ENCODE measurements at regions of chr1 and their contacts with region 1.

Region 1: GRCh38 chr1:194295685-194296084 is 1109.3 kb upstream of the B3GALT2 start:
- DNase-seq: peak in 7 of 9 donors; percentile 51 to 78 (median 69)
- ATAC-seq: peak; percentile 94
- H3K4me3 ChIP-seq: no peak overlapping the region
- H3K4me3 Mint-ChIP-seq: no peak overlapping the region
- H3K27ac ChIP-seq: no peak overlapping the region
- H3K27ac Mint-ChIP-seq: peak overlapping the region in 4 of 9 donors; percentile 10 to 71 (median 56)
- H3K4me1 ChIP-seq: peaks cover 2 to 9% of the 10 kb centered on the region in 2 donors
- H3K4me1 Mint-ChIP-seq: peaks cover 8 to 25% (median 20%) of the 10 kb centered on the region in 7 donors
- H3K27me3 ChIP-seq: no peaks in the 10 kb centered on the region
- H3K27me3 Mint-ChIP-seq: no peaks in the 10 kb centered on the region

Region 2: GRCh38 chr1:193019442-193020026 is 1276.2 kb before region 1 on chr1:
- CTCF ChIA-PET with region 1: no interaction called
- POLR2A ChIA-PET with region 1: no interaction called
- intact Hi-C with region 1: loop called in 1 of 2 experiments (anchors 5 kb)
- DNase-seq: peak in 6 of 9 donors; percentile 14 to 36 (median 22)
- ATAC-seq: peak; percentile 55
- H3K4me3 ChIP-seq: no peak overlapping the region
- H3K4me3 Mint-ChIP-seq: no peak overlapping the region
- H3K27ac ChIP-seq: no peak overlapping the region
- H3K27ac Mint-ChIP-seq: no peak overlapping the region
- H3K4me1 ChIP-seq: no peaks in the 10 kb centered on the region
- H3K4me1 Mint-ChIP-seq: no peaks in the 10 kb centered on the region
- H3K27me3 ChIP-seq: no peaks in the 10 kb centered on the region
- H3K27me3 Mint-ChIP-seq: no peaks in the 10 kb centered on the region

Region 3: GRCh38 chr1:193143285-193143684 is 1152.4 kb before region 1 on chr1:
- CTCF ChIA-PET with region 1: interaction called, 5 read pairs
- POLR2A ChIA-PET with region 1: no interaction called
- intact Hi-C with region 1: loop called (anchors 1 kb)
- DNase-seq: peak in 1 of 9 donors; percentile 25
- ATAC-seq: no peak
- H3K4me3 ChIP-seq: no peak overlapping the region
- H3K4me3 Mint-ChIP-seq: no peak overlapping the region
- H3K27ac ChIP-seq: no peak overlapping the region
- H3K27ac Mint-ChIP-seq: peak overlapping the region in 2 of 9 donors; percentile 8 to 46
- H3K4me1 ChIP-seq: no peaks in the 10 kb centered on the region
- H3K4me1 Mint-ChIP-seq: peaks cover 11 to 34% (median 27%) of the 10 kb centered on the region in 7 donors
- H3K27me3 ChIP-seq: no peaks in the 10 kb centered on the region
- H3K27me3 Mint-ChIP-seq: no peaks in the 10 kb centered on the region

Region 4: GRCh38 chr1:193260056-193260745 is 1035.5 kb before region 1 on chr1:
- CTCF ChIA-PET with region 1: no interaction called
- POLR2A ChIA-PET with region 1: no interaction called
- intact Hi-C with region 1: loop called in 1 of 2 experiments (anchors 2 kb)
- DNase-seq: no peak
- ATAC-seq: no peak
- H3K4me3 ChIP-seq: no peak overlapping the region
- H3K4me3 Mint-ChIP-seq: no peak overlapping the region
- H3K27ac ChIP-seq: no peak overlapping the region
- H3K27ac Mint-ChIP-seq: no peak overlapping the region
- H3K4me1 ChIP-seq: no peaks in the 10 kb centered on the region
- H3K4me1 Mint-ChIP-seq: peaks cover 0 to 7% (median 0%) of the 10 kb centered on the region in 7 donors
- H3K27me3 ChIP-seq: no peaks in the 10 kb centered on the region
- H3K27me3 Mint-ChIP-seq: no peaks in the 10 kb centered on the region

Region 5: GRCh38 chr1:193479187-193479586 is 816.5 kb before region 1 on chr1:
- CTCF ChIA-PET with region 1: no interaction called
- POLR2A ChIA-PET with region 1: no interaction called
- intact Hi-C with region 1: loop called in 1 of 2 experiments (anchors 10 kb)
- DNase-seq: peak; percentile 18 to 95 (median 91)
- ATAC-seq: peak; percentile 97
- H3K4me3 ChIP-seq: peak overlapping the region; percentile 24
- H3K4me3 Mint-ChIP-seq: peak overlapping the region; percentile 23 to 72 (median 60)
- H3K27ac ChIP-seq: peak overlapping the region; percentile 37
- H3K27ac Mint-ChIP-seq: peak overlapping the region; percentile 85 to 99 (median 94)
- H3K4me1 ChIP-seq: peaks cover 31 to 38% of the 10 kb centered on the region in 2 donors
- H3K4me1 Mint-ChIP-seq: peaks cover 27 to 72% (median 56%) of the 10 kb centered on the region in 7 donors
- H3K27me3 ChIP-seq: no peaks in the 10 kb centered on the region
- H3K27me3 Mint-ChIP-seq: no peaks in the 10 kb centered on the region

Region 6: GRCh38 chr1:193774535-193775323 is 521.0 kb before region 1 on chr1:
- CTCF ChIA-PET with region 1: no interaction called
- POLR2A ChIA-PET with region 1: no interaction called
- intact Hi-C with region 1: no loop called
- DNase-seq: no peak
- ATAC-seq: no peak
- H3K4me3 ChIP-seq: no peak overlapping the region
- H3K4me3 Mint-ChIP-seq: no peak overlapping the region
- H3K27ac ChIP-seq: no peak overlapping the region
- H3K27ac Mint-ChIP-seq: no peak overlapping the region
- H3K4me1 ChIP-seq: no peaks in the 10 kb centered on the region
- H3K4me1 Mint-ChIP-seq: peaks cover 0 to 15% (median 8%) of the 10 kb centered on the region in 7 donors
- H3K27me3 ChIP-seq: no peaks in the 10 kb centered on the region
- H3K27me3 Mint-ChIP-seq: no peaks in the 10 kb centered on the region

Region 7: DNA sequence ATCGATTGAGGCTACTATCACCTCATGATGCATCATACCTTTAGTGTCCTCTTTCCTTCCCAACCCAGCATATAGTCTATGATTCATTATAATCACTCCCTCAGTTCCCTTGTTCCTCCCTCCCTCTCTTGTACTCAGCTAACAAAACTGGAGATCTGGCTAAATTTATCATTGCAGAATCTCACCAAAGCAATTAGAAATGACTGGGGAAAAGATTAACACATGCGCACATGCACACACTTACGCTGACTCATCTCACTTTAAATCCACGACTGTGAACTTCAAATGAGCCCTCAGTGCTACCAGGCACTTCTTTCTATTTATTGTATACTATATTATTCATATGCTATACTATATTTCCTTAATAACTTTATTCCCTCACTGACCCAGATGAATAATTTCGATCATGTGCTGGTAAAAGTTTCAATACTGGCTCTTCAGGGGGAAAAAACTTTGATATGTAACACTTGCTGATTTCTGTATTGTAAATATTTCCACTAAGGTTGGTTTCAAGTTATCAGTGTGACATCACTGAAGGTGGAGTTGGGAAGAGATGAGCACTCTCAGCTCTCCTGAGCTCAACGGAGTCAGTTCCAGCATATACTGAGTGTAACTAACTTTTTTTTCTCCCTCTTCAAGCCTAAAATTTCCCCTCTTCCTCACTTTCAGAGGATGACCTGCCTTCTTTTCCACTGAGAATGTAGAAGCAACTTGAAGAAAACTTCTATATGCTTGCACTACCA is 495.6 kb before region 1 on chr1:
- CTCF ChIA-PET with region 1: no interaction called
- POLR2A ChIA-PET with region 1: no interaction called
- intact Hi-C with region 1: no loop called
- DNase-seq: no peak
- ATAC-seq: no peak
- H3K4me3 ChIP-seq: no peak overlapping the region
- H3K4me3 Mint-ChIP-seq: no peak overlapping the region
- H3K27ac ChIP-seq: no peak overlapping the region
- H3K27ac Mint-ChIP-seq: peak overlapping the region in 1 of 9 donors; percentile 51
- H3K4me1 ChIP-seq: no peaks in the 10 kb centered on the region
- H3K4me1 Mint-ChIP-seq: no peaks in the 10 kb centered on the region
- H3K27me3 ChIP-seq: no peaks in the 10 kb centered on the region
- H3K27me3 Mint-ChIP-seq: no peaks in the 10 kb centered on the region

Region 8: GRCh38 chr1:194151056-194151455 is 144.6 kb before region 1 on chr1:
- CTCF ChIA-PET with region 1: no interaction called
- POLR2A ChIA-PET with region 1: no interaction called
- intact Hi-C with region 1: loop called in 1 of 2 experiments (anchors 2 kb)
- DNase-seq: no peak
- ATAC-seq: no peak
- H3K4me3 ChIP-seq: peak overlapping the region; percentile 30
- H3K4me3 Mint-ChIP-seq: peak overlapping the region in 9 of 10 donors; percentile 68 to 89 (median 77)
- H3K27ac ChIP-seq: no peak overlapping the region
- H3K27ac Mint-ChIP-seq: peak overlapping the region in 8 of 9 donors; percentile 5 to 89 (median 63)
- H3K4me1 ChIP-seq: peaks cover 0 to 4% of the 10 kb centered on the region in 2 donors
- H3K4me1 Mint-ChIP-seq: peaks cover 2 to 22% (median 17%) of the 10 kb centered on the region in 7 donors
- H3K27me3 ChIP-seq: no peaks in the 10 kb centered on the region
- H3K27me3 Mint-ChIP-seq: no peaks in the 10 kb centered on the region

Region 9: GRCh38 chr1:194184425-194184824 is 111.3 kb before region 1 on chr1:
- CTCF ChIA-PET with region 1: no interaction called
- POLR2A ChIA-PET with region 1: no interaction called
- intact Hi-C with region 1: no loop called
- DNase-seq: no peak
- ATAC-seq: no peak
- H3K4me3 ChIP-seq: no peak overlapping the region
- H3K4me3 Mint-ChIP-seq: no peak overlapping the region
- H3K27ac ChIP-seq: no peak overlapping the region
- H3K27ac Mint-ChIP-seq: no peak overlapping the region
- H3K4me1 ChIP-seq: no peaks in the 10 kb centered on the region
- H3K4me1 Mint-ChIP-seq: peaks cover 0 to 1% (median 0%) of the 10 kb centered on the region in 7 donors
- H3K27me3 ChIP-seq: no peaks in the 10 kb centered on the region
- H3K27me3 Mint-ChIP-seq: no peaks in the 10 kb centered on the region

Region 10: DNA sequence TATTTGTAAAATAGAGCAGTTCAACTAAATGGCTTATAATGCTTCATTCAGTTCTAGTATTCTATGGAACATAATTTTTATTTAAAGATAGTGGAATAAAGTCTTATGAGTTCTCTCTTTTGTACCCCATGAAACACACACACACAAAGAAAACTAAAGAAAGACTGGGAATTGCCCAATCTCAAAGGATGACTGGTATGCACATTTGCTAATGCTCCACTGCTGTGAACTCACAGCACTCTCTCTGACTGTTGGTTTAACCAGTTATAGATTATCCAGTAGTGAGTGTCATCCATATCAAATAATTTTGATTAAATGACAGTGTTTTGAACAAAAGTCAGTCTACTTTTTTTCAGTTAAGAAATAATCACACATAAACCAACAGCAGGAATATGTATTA is 26.8 kb before region 1 on chr1:
- CTCF ChIA-PET with region 1: no interaction called
- POLR2A ChIA-PET with region 1: no interaction called
- intact Hi-C with region 1: no loop called
- DNase-seq: no peak
- ATAC-seq: no peak
- H3K4me3 ChIP-seq: no peak overlapping the region
- H3K4me3 Mint-ChIP-seq: no peak overlapping the region
- H3K27ac ChIP-seq: no peak overlapping the region
- H3K27ac Mint-ChIP-seq: no peak overlapping the region
- H3K4me1 ChIP-seq: no peaks in the 10 kb centered on the region
- H3K4me1 Mint-ChIP-seq: peaks cover 0 to 6% (median 0%) of the 10 kb centered on the region in 7 donors
- H3K27me3 ChIP-seq: no peaks in the 10 kb centered on the region
- H3K27me3 Mint-ChIP-seq: no peaks in the 10 kb centered on the region